Activated CD4-positive, alpha-beta memory T cell treated with anti-CD3 and anti-CD28 coated beads for 36 hours (primary cell): ENCODE measurements at regions of chr13 and their contacts with region 1.

Region 1: DNA sequence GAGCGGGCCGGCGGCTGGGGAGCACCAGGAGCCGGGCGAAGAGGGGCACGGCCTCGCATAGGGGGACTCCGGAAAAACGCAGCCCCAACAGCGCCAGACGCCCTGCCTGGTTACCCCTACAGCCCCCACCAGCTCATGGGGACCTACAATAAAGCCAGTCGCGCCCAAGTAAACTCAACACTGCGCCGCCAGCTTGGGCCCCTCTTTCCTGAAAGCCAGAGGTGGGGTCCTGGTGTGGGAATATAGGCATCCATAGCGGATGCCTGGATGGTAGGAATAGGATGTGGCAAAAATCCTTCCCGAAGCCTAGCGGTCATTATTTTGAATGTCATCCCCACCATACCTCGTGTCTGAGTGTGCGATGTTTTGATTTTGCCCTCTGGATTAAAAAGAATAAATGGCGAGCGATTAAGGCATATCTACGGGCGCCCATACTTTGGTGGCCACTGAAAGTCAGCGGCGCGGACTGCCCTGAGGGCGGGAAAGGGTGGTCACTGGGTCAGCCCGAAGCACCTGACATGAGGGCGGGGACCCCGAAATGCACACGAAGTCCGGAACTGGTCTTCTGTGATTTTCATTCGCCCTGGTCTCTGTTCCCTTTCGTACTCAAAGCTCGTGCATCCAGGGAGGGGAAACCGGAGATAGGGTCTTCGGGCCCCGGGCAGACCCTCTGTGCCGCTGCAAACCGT is at the starts of genes NHLRC3 and PROSER1:
- DNase-seq: peak; percentile 87
- H3K4me3 Mint-ChIP-seq: peak within 1 kb of the TSS; percentile 89
- H3K27ac Mint-ChIP-seq: peak within 1 kb of the TSS; percentile 95
- H3K4me1 Mint-ChIP-seq: peaks cover 36% of the 10 kb centered on the region
- H3K27me3 Mint-ChIP-seq: no peaks in the 10 kb centered on the region
- total RNA-seq, gene NHLRC3: 15.2 to 16.8 TPM
- total RNA-seq, gene PROSER1: 59.9 to 70.5 TPM

Region 2: GRCh38 chr13:38349390-38350113 is 688.5 kb before region 1 on chr13 and contains the start of gene UFM1:
- CTCF ChIA-PET with region 1: no interaction called
- POLR2A ChIA-PET with region 1: no interaction called
- intact Hi-C with region 1: loop called (anchors 1 kb)
- DNase-seq: peak; percentile 91
- H3K4me3 Mint-ChIP-seq: peak within 1 kb of the TSS; percentile 100
- H3K27ac Mint-ChIP-seq: peak within 1 kb of the TSS; percentile 99
- H3K4me1 Mint-ChIP-seq: peaks cover 35% of the 10 kb centered on the region
- H3K27me3 Mint-ChIP-seq: no peaks in the 10 kb centered on the region
- total RNA-seq, gene UFM1: 45.9 to 46.6 TPM

Region 3: DNA sequence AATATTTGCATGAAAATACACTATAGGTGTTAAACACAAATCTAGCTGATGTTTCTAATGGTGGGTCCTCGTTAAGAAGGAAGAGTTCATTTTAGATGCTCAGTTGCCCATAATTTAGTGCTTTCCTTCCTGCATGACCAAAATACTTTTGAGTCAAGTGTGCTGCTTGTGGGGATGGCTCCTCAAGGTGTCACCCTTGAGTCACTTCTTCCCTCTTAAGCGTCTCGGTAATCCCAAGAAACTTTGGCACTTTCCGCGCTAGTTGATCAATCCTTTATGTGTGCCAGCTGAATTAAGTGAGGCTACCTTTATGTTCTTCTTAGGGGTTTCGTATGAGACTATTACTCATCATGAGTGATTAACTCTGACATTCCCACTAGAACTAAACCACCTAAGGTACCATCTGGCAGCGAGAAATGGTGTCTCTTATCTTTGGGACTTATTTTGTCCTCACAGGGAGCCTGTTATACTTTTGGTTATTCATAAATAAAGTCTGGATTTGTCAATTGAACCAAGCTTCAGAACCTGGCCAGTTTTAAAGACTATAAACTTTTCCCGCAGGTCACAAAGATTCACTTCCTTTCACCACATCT is 107.0 kb after region 1 on chr13:
- CTCF ChIA-PET with region 1: interaction called, 4 read pairs
- POLR2A ChIA-PET with region 1: no interaction called
- intact Hi-C with region 1: loop called (anchors 5 kb)
- DNase-seq: peak; percentile 59
- H3K4me3 Mint-ChIP-seq: no peak overlapping the region
- H3K27ac Mint-ChIP-seq: no peak overlapping the region
- H3K4me1 Mint-ChIP-seq: peaks cover 43% of the 10 kb centered on the region
- H3K27me3 Mint-ChIP-seq: peaks cover 19% of the 10 kb centered on the region

Region 4: GRCh38 chr13:39186205-39186875 is 148.3 kb after region 1 on chr13:
- CTCF ChIA-PET with region 1: no interaction called
- POLR2A ChIA-PET with region 1: no interaction called
- intact Hi-C with region 1: no loop called
- DNase-seq: no peak
- H3K4me3 Mint-ChIP-seq: no peak overlapping the region
- H3K27ac Mint-ChIP-seq: no peak overlapping the region
- H3K4me1 Mint-ChIP-seq: peaks cover under 1% of the 10 kb centered on the region
- H3K27me3 Mint-ChIP-seq: peaks cover 6% of the 10 kb centered on the region

Region 5: DNA sequence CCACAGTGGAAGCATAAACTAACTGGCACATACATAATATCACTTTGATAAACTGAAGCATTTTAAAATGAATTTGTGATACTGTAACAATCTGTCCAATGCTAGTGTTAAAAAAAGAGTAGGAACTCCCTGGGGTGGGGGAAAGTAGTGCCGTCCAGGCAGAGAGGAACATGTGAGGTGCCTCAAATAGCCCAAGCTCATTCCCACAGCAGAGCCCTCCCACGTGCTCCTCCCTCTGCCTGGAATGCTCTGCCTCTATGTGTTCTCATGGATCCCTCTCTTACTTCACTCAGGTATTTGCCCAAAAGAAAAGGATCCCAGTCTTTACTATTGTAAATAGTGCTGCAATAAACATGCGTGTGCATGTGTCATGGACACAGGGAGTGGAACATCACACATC is 188.3 kb after region 1 on chr13:
- CTCF ChIA-PET with region 1: no interaction called
- POLR2A ChIA-PET with region 1: no interaction called
- intact Hi-C with region 1: no loop called
- DNase-seq: no peak
- H3K4me3 Mint-ChIP-seq: no peak overlapping the region
- H3K27ac Mint-ChIP-seq: no peak overlapping the region
- H3K4me1 Mint-ChIP-seq: no peaks in the 10 kb centered on the region
- H3K27me3 Mint-ChIP-seq: peaks cover 6% of the 10 kb centered on the region

Region 6: DNA sequence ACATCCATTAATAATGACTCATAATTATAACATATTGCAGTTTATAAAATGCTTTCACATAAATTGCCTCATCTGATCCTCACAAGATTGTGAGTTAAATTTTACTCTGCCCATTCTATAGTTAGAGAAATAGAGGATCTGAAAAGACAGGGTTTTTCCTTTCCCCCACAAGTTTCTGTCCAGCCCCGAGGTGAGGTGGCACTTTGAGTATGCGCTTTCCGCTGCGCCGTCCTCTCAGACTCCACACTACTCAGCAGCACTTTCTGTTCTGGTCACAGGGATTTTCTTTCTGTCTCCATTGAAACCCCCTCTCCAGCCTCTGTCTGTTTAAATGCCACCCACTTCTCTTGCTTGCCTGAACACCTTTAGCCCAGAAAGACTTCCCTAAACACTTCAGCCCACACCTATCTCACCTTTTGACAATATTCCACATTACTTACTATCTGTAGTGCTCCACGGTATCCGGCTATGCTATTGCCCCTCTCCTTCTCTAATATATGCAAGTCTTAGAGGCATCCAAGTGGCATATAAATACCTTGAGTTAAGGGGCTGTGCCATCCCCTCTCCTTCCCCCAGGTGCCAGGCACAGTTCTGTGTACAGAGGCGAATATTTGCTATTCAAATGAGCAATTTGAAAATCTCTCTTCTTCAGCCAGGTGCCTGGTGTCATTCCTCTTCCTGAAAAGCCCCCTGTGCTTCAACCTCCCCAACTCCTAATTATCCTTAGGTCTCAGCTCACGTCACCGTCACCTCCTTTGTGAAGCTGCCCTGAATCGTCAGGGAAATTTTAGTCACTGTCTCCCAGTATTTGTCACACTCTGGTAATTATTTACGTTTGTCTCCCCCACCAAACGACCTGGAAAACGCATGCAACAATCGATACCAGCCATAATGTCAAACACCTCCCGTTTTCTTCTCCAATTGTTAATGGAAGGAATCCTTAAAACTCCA is 268.9 kb after region 1 on chr13:
- CTCF ChIA-PET with region 1: no interaction called
- POLR2A ChIA-PET with region 1: interaction called, 3 read pairs
- intact Hi-C with region 1: loop called (anchors 2 kb)
- DNase-seq: peak; percentile 72
- H3K4me3 Mint-ChIP-seq: peak overlapping the region; percentile 7
- H3K27ac Mint-ChIP-seq: peak overlapping the region; percentile 28
- H3K4me1 Mint-ChIP-seq: peaks cover 21% of the 10 kb centered on the region
- H3K27me3 Mint-ChIP-seq: peaks cover 8% of the 10 kb centered on the region

Region 7: DNA sequence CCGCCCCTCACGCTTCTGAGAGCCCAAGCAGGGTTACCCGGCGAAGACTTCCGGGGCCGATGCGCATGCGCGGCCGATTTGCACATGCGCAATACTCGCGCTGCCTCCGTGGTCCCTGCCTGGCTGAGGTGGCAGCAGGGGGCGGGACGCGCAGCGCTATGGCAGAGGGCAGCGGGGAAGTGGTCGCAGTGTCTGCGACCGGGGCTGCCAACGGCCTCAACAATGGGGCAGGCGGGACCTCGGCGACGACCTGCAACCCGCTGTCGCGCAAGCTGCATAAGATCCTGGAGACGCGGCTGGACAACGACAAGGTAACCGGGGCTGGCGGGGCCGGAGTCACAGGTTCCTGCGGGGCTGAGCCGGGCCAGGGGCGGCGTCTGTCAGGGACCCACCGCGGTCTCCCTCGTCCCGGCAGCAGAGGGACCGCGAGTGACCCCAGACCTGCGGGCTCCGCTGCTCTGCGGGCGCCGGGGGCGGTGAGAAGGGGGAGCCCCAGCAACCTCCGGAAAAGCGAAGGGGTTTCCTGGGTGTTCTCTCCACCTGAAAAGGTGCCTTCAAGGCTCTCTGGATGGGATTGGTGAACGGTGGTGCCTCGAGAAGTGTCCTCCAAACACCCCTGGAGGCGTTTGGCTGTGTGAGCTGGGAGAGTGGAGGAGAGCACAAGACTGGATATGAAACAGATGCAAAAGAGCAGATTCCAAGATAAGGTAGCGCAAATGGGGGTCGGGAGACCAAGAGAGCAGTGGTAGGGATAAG is 617.7 kb after region 1 on chr13 and contains the start of gene COG6:
- CTCF ChIA-PET with region 1: no interaction called
- POLR2A ChIA-PET with region 1: interaction called, 3 read pairs
- intact Hi-C with region 1: loop called (anchors 1 kb)
- DNase-seq: peak; percentile 96
- H3K4me3 Mint-ChIP-seq: peak within 1 kb of the TSS; percentile 91
- H3K27ac Mint-ChIP-seq: peak within 1 kb of the TSS; percentile 82
- H3K4me1 Mint-ChIP-seq: peaks cover 18% of the 10 kb centered on the region
- H3K27me3 Mint-ChIP-seq: no peaks in the 10 kb centered on the region
- total RNA-seq, gene COG6: 25.5 to 37.3 TPM